ENCODE measurements at regions of chr6 and their contacts with region 1.

Region 1: GRCh38 chr6:6547110-6547879 is 41.2 kb upstream of the LY86 start:
- DNase-seq: peak; percentile 75
- ATAC-seq: peak; percentile 97
- H3K4me3 ChIP-seq: peak overlapping the region; percentile 16
- H3K27ac ChIP-seq: no peak overlapping the region
- H3K4me1 ChIP-seq: no peaks in the 10 kb centered on the region
- H3K27me3 ChIP-seq: peaks cover 5% of the 10 kb centered on the region; the same call in 1 of the 2 replicates
- CTCF ChIP-seq: peak; percentile 92
- POLR2A ChIP-seq: no peak
- RAD21 ChIP-seq: peak; percentile 91

Region 2: DNA sequence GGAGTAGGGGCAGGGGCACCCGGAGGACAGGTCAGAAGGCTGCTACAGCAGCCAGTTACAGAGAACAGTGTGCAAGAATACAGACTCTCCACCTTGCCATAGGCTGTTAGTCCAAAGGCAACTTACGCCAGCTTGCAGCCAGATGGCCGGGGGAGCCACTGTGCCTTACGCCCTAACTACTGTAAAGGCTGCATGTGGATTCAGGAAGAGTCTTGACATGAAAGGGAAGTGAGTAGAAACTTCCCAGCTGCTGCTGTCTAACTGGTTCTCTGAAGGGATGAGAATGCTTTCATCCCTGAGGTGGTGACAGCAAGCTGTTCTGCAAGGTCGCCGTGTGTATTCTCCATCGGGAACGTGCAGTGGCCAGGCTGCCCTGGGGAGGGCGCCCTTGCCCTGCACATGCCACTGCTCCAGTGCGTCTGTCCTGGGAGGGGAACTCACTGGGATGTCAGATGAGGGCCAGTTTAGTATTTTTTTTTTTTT is 1332.7 kb before region 1 on chr6:
- CTCF ChIA-PET with region 1: no interaction called
- POLR2A ChIA-PET with region 1: no interaction called
- dilution Hi-C with region 1: no loop called
- in situ Hi-C with region 1: loop called (anchors 25 kb)
- intact Hi-C with region 1: no loop called
- DNase-seq: peak; percentile 78
- ATAC-seq: peak; percentile 78
- H3K4me3 ChIP-seq: no peak overlapping the region
- H3K27ac ChIP-seq: no peak overlapping the region
- H3K4me1 ChIP-seq: peaks cover 8% of the 10 kb centered on the region; the same call in 1 of the 2 replicates
- H3K27me3 ChIP-seq: no peaks in the 10 kb centered on the region
- CTCF ChIP-seq: peak; percentile 69
- POLR2A ChIP-seq: no peak
- RAD21 ChIP-seq: peak; percentile 82

Region 3: DNA sequence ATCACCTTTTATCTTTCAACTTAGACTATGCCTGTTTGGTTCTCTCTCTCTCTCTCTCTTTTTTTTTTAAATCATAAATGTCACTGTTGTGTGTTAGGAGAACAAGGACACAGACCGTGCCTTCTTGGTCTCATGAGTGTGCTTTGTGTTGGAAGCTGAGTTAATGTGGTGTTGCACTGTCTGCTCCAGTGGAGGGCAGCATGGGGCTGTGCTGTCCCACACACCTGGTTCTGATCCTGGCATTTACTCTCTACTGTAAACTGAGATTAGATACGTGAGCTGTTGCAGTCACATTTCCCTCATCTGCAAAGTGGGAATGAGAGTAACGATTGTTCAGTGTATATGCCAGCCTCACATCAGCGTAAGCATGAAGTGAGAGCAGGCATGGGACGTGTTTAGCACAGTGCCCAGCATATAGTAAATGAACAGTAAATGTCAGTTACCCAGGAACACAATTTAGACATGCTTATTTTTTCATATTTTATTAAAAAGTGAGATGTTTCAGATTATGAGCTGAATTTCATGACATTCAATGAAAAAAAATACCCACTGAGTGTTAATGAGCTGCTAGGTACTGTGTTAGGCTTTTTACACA is 1124.9 kb before region 1 on chr6:
- CTCF ChIA-PET with region 1: interaction called, 3 read pairs
- POLR2A ChIA-PET with region 1: no interaction called
- dilution Hi-C with region 1: no loop called
- in situ Hi-C with region 1: loop called (anchors 10 kb)
- intact Hi-C with region 1: loop called (anchors 1 kb)
- DNase-seq: peak; percentile 62
- ATAC-seq: peak; percentile 94
- H3K4me3 ChIP-seq: no peak overlapping the region
- H3K27ac ChIP-seq: no peak overlapping the region
- H3K4me1 ChIP-seq: peaks cover 5% of the 10 kb centered on the region; the same call in 1 of the 2 replicates
- H3K27me3 ChIP-seq: no peaks in the 10 kb centered on the region
- CTCF ChIP-seq: peak; percentile 72
- POLR2A ChIP-seq: no peak
- RAD21 ChIP-seq: peak; percentile 86

Region 4: DNA sequence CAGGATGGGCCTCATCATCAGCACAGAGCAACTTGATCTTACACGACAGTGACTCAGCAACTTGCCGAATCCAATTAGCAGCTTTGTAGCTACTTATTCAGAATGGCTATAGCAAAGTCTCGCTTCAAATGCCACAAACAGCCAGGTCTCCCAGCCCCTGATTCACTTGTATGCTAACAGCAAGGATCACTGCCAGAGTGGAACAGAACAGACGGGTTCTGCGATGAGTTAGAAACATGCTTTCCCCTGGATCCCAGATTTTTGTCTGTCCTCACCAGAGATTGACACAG is 795.0 kb before region 1 on chr6:
- CTCF ChIA-PET with region 1: no interaction called
- POLR2A ChIA-PET with region 1: no interaction called
- dilution Hi-C with region 1: no loop called
- in situ Hi-C with region 1: no loop called
- intact Hi-C with region 1: loop called (anchors 10 kb)
- DNase-seq: peak; percentile 82
- ATAC-seq: peak; percentile 84
- H3K4me3 ChIP-seq: no peak overlapping the region
- H3K27ac ChIP-seq: peak overlapping the region; percentile 68
- H3K4me1 ChIP-seq: peaks cover 10% of the 10 kb centered on the region
- H3K27me3 ChIP-seq: no peaks in the 10 kb centered on the region
- CTCF ChIP-seq: no peak
- POLR2A ChIP-seq: no peak
- RAD21 ChIP-seq: no peak

Region 5: GRCh38 chr6:6469074-6469473 is 78.2 kb before region 1 on chr6:
- CTCF ChIA-PET with region 1: no interaction called
- POLR2A ChIA-PET with region 1: no interaction called
- dilution Hi-C with region 1: no loop called
- in situ Hi-C with region 1: no loop called
- intact Hi-C with region 1: no loop called
- DNase-seq: no peak
- ATAC-seq: no peak
- H3K4me3 ChIP-seq: no peak overlapping the region
- H3K27ac ChIP-seq: no peak overlapping the region
- H3K4me1 ChIP-seq: no peaks in the 10 kb centered on the region
- H3K27me3 ChIP-seq: no peaks in the 10 kb centered on the region
- CTCF ChIP-seq: no peak
- POLR2A ChIP-seq: no peak
- RAD21 ChIP-seq: no peak